CD14-positive monocyte (primary cell): ENCODE measurements at regions of chr3 and their contacts with region 1.

Region 1: DNA sequence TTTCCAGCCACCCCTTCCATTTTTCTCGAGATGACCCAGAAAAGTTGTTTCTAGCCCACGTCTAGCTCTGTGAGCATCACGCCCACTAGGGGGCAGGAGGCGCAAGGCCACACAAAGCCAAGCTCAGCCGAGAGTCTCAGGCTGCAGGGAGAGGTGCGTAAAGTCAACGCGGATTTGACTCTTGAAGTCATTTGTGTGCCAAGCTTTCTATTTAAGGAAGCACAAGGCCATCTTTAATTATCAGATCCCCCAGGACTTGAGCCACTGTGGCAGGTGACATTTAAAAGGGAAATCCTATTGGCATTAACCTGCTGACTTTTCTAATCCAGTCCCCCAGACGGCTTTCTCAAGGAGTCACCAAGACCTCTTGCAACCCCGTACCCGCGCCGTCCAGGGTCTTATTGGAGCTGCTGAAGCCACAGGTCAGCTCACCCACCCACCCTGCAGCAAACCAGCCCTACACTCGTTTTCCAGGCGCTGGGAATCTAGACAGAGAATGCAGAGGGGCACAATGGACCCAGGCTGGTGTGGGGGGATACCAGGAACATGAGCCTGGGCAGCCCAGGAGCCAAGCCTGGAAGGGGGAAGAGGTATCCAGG is 62.1 kb downstream of the CAPN7 start:
- DNase-seq: peak; percentile 88 to 92 (median 89)
- H3K4me3 ChIP-seq: peak overlapping the region in 1 of 3 experiments; percentile 4
- H3K4me3 Mint-ChIP-seq: no peak overlapping the region
- H3K27ac ChIP-seq: peak overlapping the region in 1 of 2 donors; percentile 95
- H3K27ac Mint-ChIP-seq: peak overlapping the region in 6 of 7 donors; percentile 54 to 100 (median 99)
- H3K4me1 ChIP-seq: peaks cover 52 to 53% of the 10 kb centered on the region in 2 donors
- H3K4me1 Mint-ChIP-seq: peaks cover 51% of the 10 kb centered on the region
- H3K27me3 ChIP-seq: no peaks in the 10 kb centered on the region
- H3K27me3 Mint-ChIP-seq: peaks cover 0 to 3% (median 3%) of the 10 kb centered on the region in 3 donors
- CTCF ChIP-seq: peak; percentile 89

Region 2: DNA sequence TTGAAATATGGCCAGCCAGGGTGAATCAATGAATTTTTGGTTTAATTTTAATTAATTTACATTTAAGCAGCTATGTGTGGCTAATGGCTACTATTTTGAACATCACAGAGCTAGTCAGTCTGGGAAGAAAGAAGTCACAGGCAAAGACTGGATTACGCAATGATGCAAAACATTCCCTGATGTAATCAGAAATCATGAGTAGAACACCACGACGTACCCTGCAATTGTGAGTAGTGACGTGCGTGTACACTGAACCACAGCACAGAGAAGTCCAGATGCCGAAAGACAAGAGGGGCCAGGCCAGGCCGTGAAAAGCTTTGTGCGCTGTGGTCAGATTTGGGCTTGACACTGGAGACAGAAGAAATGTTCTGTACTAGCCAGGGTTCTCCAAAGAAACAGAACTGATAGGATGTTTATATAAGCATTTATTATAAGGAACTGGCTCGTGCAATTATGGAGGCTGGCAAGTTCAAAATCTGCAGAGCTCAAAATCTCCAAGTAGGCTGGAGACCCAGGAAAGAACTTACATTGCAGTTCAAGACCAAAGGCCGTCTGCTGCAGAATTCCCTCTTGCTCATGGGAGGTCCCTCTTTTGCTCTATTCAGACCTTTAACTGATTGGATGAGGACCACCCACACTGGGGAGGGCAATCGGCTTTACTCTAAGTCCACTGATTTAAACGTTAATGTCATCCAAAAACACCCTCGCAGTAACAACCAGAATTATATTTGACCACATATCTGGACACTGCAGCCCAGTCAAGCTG is 19.6 kb after region 1 on chr3:
- intact Hi-C with region 1: loop called (anchors 2 kb)
- DNase-seq: peak; percentile 91 to 98 (median 97)
- H3K4me3 ChIP-seq: peak overlapping the region in 1 of 3 experiments; percentile 21
- H3K4me3 Mint-ChIP-seq: peak overlapping the region in 1 of 2 donors; percentile 48
- H3K27ac ChIP-seq: peak overlapping the region; percentile 77 to 95
- H3K27ac Mint-ChIP-seq: peak overlapping the region; percentile 96 to 100 (median 98)
- H3K4me1 ChIP-seq: peaks cover 63 to 64% of the 10 kb centered on the region in 2 donors
- H3K4me1 Mint-ChIP-seq: peaks cover 68% of the 10 kb centered on the region
- H3K27me3 ChIP-seq: no peaks in the 10 kb centered on the region
- H3K27me3 Mint-ChIP-seq: peaks cover 0 to 5% (median 0%) of the 10 kb centered on the region in 3 donors
- CTCF ChIP-seq: no peak

Region 3: GRCh38 chr3:15300323-15301078 is 32.4 kb after region 1 on chr3:
- intact Hi-C with region 1: loop called (anchors 2 to 5 kb)
- DNase-seq: peak; percentile 87 to 97 (median 95)
- H3K4me3 ChIP-seq: no peak overlapping the region
- H3K4me3 Mint-ChIP-seq: peak overlapping the region in 1 of 2 donors; percentile 57
- H3K27ac ChIP-seq: peak overlapping the region; percentile 67 to 93
- H3K27ac Mint-ChIP-seq: peak overlapping the region; percentile 91 to 99 (median 97)
- H3K4me1 ChIP-seq: peaks cover 44 to 55% of the 10 kb centered on the region in 2 donors
- H3K4me1 Mint-ChIP-seq: peaks cover 46% of the 10 kb centered on the region
- H3K27me3 ChIP-seq: no peaks in the 10 kb centered on the region
- H3K27me3 Mint-ChIP-seq: peaks cover 0 to 8% (median 8%) of the 10 kb centered on the region in 3 donors
- CTCF ChIP-seq: peak; percentile 5

Region 4: DNA sequence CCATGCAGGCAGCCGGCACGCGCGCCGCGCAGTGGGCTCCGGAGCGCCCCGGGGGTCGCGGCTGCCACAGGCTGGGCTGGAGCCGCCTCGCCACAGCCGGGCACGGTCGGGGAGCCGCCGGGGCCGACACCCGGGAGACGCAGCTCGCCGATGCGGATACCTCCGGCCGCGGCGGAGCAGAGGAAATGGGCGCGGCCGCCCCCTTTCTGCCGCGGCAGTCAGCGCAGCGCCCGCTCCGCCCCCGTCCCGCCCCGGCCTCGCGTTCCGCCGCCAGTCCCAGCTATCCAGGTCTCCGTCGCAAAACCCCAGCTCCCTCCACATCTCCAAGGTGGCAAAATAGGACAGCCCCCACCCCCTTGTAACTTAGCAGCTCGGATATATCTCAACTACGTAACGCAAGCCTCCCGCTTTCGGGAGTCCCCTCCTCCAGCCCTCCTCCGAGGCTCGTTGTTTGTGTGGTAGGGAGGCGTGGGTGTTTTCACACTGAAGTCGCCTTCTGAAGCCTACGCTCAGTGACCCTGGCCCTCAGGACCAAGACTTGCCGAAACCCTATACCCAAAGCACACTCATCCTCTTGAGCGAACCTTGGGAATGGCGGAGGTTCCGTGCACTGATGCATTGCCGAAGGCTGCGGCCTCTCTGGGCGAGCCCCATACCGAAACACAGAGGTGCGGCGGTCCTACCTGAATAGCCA is 64.4 kb after region 1 on chr3 and contains the start of gene SH3BP5:
- intact Hi-C with region 1: loop called (anchors 2 to 5 kb)
- DNase-seq: peak; percentile 65 to 72 (median 70)
- H3K4me3 ChIP-seq: peak within 1 kb of the TSS; percentile 78 to 84 (median 82)
- H3K4me3 Mint-ChIP-seq: peak within 1 kb of the TSS; percentile 97
- H3K27ac ChIP-seq: peak within 1 kb of the TSS; percentile 40 to 86
- H3K27ac Mint-ChIP-seq: peak within 1 kb of the TSS; percentile 79 to 94 (median 89)
- H3K4me1 ChIP-seq: peaks cover 18 to 34% of the 10 kb centered on the region in 2 donors
- H3K4me1 Mint-ChIP-seq: peaks cover 39% of the 10 kb centered on the region
- H3K27me3 ChIP-seq: peaks cover 2 to 3% of the 10 kb centered on the region in 2 donors
- H3K27me3 Mint-ChIP-seq: peaks cover 19 to 24% (median 21%) of the 10 kb centered on the region in 3 donors
- CTCF ChIP-seq: peak; percentile 73
- polyA plus RNA-seq, gene SH3BP5: 10.7 to 29.6 (median 22.8) TPM

Region 5: GRCh38 chr3:15377961-15378791 is 110.0 kb after region 1 on chr3:
- intact Hi-C with region 1: loop called (anchors 1 to 5 kb)
- DNase-seq: peak; percentile 96 to 98 (median 97)
- H3K4me3 ChIP-seq: no peak overlapping the region
- H3K4me3 Mint-ChIP-seq: no peak overlapping the region
- H3K27ac ChIP-seq: peak overlapping the region; percentile 39 to 88
- H3K27ac Mint-ChIP-seq: peak overlapping the region; percentile 85 to 95 (median 90)
- H3K4me1 ChIP-seq: peaks cover 4 to 9% of the 10 kb centered on the region in 2 donors
- H3K4me1 Mint-ChIP-seq: peaks cover 12% of the 10 kb centered on the region
- H3K27me3 ChIP-seq: no peaks in the 10 kb centered on the region
- H3K27me3 Mint-ChIP-seq: peaks cover 0 to 1% (median 0%) of the 10 kb centered on the region in 3 donors
- CTCF ChIP-seq: peak; percentile 85

Region 6: DNA sequence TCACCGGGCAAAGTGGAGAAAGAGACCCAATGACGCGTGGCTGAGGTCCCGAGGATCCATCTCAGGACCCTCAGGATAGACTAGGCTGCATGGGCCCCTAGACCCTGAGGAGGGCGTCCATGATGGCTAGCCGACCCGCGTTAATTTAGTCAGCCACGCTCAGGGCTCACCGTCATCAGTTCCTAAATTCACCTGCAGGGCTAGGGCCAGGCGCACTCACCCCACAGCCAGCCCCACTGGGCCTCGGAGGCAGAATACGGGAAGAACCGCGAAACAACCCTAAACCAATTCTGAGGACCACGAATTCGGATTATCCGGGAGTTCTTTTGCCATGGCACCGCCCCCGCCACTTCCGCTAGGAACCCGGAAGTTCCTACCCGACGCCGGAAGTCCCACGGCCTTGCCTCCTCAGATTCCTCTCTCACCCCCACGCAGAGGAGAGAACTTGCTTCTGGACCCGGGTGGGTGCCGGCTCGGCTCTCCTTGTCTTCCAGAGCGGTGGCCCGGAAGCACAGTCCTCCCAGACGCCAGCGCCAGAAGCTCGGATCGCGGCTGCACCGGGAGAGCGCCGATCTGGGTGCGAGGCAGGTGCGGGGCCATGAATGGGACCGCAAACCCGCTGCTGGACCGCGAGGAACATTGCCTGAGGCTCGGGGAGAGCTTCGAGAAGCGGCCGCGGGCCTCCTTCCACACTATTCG is 159.2 kb after region 1 on chr3 and contains the starts of genes EAF1 and METTL6:
- intact Hi-C with region 1: loop called in 1 of 2 experiments (anchors 5 kb)
- DNase-seq: peak; percentile 87 to 93 (median 89)
- H3K4me3 ChIP-seq: peak within 1 kb of the TSS; percentile 73 to 97 (median 92)
- H3K4me3 Mint-ChIP-seq: peak within 1 kb of the TSS; percentile 96 to 99
- H3K27ac ChIP-seq: peak within 1 kb of the TSS; percentile 94 to 99
- H3K27ac Mint-ChIP-seq: peak within 1 kb of the TSS; percentile 98 to 100 (median 99)
- H3K4me1 ChIP-seq: peaks cover 21 to 32% of the 10 kb centered on the region in 2 donors
- H3K4me1 Mint-ChIP-seq: peaks cover 46% of the 10 kb centered on the region
- H3K27me3 ChIP-seq: no peaks in the 10 kb centered on the region
- H3K27me3 Mint-ChIP-seq: no peaks in the 10 kb centered on the region
- CTCF ChIP-seq: no peak
- polyA plus RNA-seq, gene EAF1: 9.0 to 44.0 (median 9.1) TPM
- polyA plus RNA-seq, gene METTL6: 4.4 to 15.1 (median 9.1) TPM

Region 7: DNA sequence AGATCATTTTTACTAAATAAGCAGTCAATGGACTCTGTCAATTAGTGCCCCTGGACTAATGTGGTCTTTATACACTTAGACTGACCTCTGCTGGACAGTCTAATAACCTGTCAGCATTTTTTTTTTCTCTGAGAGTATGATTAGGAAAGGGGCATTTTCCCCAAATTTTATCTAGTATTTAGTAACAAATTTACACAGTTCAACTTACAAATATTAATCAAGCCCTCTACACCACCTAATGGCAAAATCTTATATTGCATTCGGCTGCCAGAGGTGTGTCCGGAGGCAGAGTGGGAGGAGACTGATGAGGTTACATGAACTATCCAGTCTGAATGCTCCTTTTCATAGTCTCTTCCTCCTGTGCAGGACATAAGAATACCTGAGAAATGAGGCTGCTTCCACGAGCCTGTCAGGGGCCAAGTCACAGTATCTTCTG is 289.4 kb after region 1 on chr3:
- intact Hi-C with region 1: loop called (anchors 2 to 10 kb)
- DNase-seq: peak; percentile 64 to 80 (median 68)
- H3K4me3 ChIP-seq: no peak overlapping the region
- H3K4me3 Mint-ChIP-seq: peak overlapping the region in 1 of 2 donors; percentile 30
- H3K27ac ChIP-seq: peak overlapping the region in 1 of 2 donors; percentile 91
- H3K27ac Mint-ChIP-seq: peak overlapping the region; percentile 92 to 98 (median 97)
- H3K4me1 ChIP-seq: peaks cover 30 to 33% of the 10 kb centered on the region in 2 donors
- H3K4me1 Mint-ChIP-seq: peaks cover 29% of the 10 kb centered on the region
- H3K27me3 ChIP-seq: no peaks in the 10 kb centered on the region
- H3K27me3 Mint-ChIP-seq: peaks cover 0 to 2% (median 0%) of the 10 kb centered on the region in 3 donors
- CTCF ChIP-seq: peak; percentile 92

Region 8: GRCh38 chr3:15932348-15933300 is 664.5 kb after region 1 on chr3:
- intact Hi-C with region 1: no loop called
- DNase-seq: no peak
- H3K4me3 ChIP-seq: no peak overlapping the region
- H3K4me3 Mint-ChIP-seq: no peak overlapping the region
- H3K27ac ChIP-seq: no peak overlapping the region
- H3K27ac Mint-ChIP-seq: no peak overlapping the region
- H3K4me1 ChIP-seq: no peaks in the 10 kb centered on the region
- H3K4me1 Mint-ChIP-seq: peaks cover 5% of the 10 kb centered on the region
- H3K27me3 ChIP-seq: no peaks in the 10 kb centered on the region
- H3K27me3 Mint-ChIP-seq: peaks cover 5 to 6% (median 6%) of the 10 kb centered on the region in 3 donors
- CTCF ChIP-seq: no peak